T-cell (primary cell): ENCODE measurements at regions of chr15 and their contacts with region 1.

Region 1: DNA sequence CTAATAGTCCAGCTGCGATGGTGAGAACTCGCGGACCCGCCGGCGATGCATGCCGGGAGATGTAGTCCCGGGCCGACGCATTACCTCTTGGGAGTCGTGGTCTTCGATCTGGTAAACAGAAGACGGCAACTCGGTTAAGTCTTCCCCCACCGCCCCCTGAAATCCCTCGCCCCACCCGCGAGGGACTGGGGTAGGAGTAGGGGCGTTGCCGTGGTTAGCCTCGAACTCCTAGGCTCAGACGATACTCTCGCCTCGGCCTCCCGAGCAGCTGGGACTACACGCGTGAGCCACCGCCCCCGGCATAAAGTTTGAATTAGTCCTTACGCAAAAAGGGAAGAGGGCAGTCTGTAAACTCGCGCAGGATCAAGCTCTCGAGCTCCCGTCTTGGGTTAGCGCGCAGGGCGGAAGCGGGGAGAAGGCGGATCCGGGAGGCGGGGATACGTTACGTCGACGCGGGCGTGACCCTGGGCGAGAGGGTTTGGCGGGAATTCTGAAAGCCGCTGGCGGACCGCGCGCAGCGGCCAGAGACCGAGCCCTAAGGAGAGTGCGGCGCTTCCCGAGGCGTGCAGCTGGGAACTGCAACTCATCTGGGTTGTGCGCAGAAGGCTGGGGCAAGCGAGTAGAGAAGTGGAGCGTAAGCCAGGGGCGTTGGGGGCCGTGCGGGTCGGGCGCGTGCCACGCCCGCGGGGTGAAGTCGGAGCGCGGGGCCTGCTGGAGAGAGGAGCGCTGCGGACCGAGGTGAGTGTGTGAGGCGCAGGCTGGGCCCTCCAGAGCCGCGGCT is at the start of gene RAD51:
- DNase-seq: peak; percentile 82 to 95 (median 91)
- ATAC-seq: peak; percentile 95 to 96 (median 96)
- H3K4me3 ChIP-seq: peak within 1 kb of the TSS; percentile 96 to 97
- H3K4me3 Mint-ChIP-seq: peak within 1 kb of the TSS; percentile 98 to 100 (median 99)
- H3K27ac ChIP-seq: peak within 1 kb of the TSS; percentile 99
- H3K27ac Mint-ChIP-seq: peak within 1 kb of the TSS; percentile 96 to 100
- H3K4me1 ChIP-seq: peaks cover 9 to 23% of the 10 kb centered on the region in 2 experiments
- H3K4me1 Mint-ChIP-seq: peaks cover 19 to 27% (median 23%) of the 10 kb centered on the region in 3 donors
- H3K27me3 ChIP-seq: no peaks in the 10 kb centered on the region
- H3K27me3 Mint-ChIP-seq: no peaks in the 10 kb centered on the region
- total RNA-seq, gene RAD51: 0.85 to 2.5 (median 1.2) TPM

Region 2: DNA sequence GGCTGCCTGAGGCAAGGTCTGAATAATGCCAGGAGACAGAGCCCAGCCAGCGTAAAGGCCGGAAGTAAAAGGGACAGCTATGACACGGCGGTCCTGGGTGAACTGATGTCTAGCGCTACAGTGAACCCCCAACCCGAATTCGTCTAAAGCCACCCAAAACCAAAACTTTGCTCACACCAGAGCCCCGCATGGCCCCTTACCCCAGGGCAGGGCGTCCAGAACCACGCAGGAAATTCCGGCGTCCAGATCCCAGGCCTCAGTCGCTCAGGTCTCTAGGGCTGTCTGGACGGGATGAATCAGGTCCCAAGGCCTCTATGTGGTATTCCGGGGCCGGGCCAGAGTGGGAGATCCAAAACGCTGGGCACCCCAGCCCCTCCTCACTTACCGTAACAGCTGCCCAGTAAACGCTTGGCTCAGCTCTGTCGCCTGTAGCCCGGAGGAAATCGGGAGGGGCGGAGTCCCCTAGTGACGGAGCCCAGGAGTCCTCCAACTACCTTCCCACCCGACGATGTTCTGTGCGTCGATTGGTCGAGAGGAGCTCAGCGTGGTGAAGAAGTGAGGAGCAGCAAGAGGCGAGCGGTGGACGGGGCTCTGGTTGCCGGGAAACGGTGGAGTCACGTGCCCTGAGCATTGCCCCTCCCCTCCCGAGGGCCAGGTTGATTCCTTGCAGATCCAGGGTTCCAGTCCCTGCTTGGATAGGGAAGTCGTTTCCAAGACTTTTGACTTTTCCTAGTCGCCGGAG is 130.1 kb before region 1 on chr15 and contains the start of gene CCDC32:
- CTCF ChIA-PET with region 1: interaction called in 1 of 2 experiments, 11 read pairs
- POLR2A ChIA-PET with region 1: interaction called, 6 to 8 read pairs
- DNase-seq: peak; percentile 82 to 99 (median 94)
- ATAC-seq: peak; percentile 93 to 96 (median 94)
- H3K4me3 ChIP-seq: peak within 1 kb of the TSS; percentile 79 to 95
- H3K4me3 Mint-ChIP-seq: peak within 1 kb of the TSS; percentile 88 to 95 (median 94)
- H3K27ac ChIP-seq: peak within 1 kb of the TSS; percentile 84
- H3K27ac Mint-ChIP-seq: peak within 1 kb of the TSS; percentile 84 to 94
- H3K4me1 ChIP-seq: peaks cover 15 to 28% of the 10 kb centered on the region in 2 experiments
- H3K4me1 Mint-ChIP-seq: peaks cover 55 to 66% (median 57%) of the 10 kb centered on the region in 3 donors
- H3K27me3 ChIP-seq: peaks cover 0 to 7% of the 10 kb centered on the region in 2 experiments
- H3K27me3 Mint-ChIP-seq: no peaks in the 10 kb centered on the region
- total RNA-seq, gene CCDC32: 19.9 to 31.5 (median 27.2) TPM